Psoas muscle (tissue), 8 donors: ENCODE measurements at regions of chr10 and their contacts with region 1.

Region 1: DNA sequence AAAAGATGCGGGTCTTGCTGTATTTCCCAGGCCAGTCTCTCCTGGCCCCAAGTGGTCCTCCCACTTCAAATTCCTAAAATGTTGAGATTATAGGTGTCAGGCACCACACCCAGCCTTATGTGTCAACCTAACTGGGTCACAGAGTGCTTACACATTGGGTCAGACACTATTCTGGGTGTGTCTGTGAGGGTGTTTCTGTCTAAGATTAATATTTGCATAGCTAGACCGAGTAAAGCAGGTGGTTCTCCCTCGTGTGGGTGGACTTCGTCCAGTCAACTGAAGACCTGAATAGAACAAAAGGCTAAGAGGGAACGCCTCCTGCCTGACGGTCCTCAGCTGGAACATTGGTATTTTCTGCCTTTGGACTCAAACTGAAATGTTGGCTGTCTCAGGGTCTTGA is 11.5 kb downstream of the PPIF start:
- DNase-seq: peak in 1 of 2 donors; percentile 46
- ATAC-seq: peak; percentile 86 to 97 (median 94)
- H3K4me3 ChIP-seq: no peak overlapping the region
- H3K27ac ChIP-seq: peak overlapping the region; percentile 56
- H3K4me1 ChIP-seq: peaks cover 9% of the 10 kb centered on the region
- H3K27me3 ChIP-seq: no peaks in the 10 kb centered on the region
- CTCF ChIP-seq: no peak

Region 2: DNA sequence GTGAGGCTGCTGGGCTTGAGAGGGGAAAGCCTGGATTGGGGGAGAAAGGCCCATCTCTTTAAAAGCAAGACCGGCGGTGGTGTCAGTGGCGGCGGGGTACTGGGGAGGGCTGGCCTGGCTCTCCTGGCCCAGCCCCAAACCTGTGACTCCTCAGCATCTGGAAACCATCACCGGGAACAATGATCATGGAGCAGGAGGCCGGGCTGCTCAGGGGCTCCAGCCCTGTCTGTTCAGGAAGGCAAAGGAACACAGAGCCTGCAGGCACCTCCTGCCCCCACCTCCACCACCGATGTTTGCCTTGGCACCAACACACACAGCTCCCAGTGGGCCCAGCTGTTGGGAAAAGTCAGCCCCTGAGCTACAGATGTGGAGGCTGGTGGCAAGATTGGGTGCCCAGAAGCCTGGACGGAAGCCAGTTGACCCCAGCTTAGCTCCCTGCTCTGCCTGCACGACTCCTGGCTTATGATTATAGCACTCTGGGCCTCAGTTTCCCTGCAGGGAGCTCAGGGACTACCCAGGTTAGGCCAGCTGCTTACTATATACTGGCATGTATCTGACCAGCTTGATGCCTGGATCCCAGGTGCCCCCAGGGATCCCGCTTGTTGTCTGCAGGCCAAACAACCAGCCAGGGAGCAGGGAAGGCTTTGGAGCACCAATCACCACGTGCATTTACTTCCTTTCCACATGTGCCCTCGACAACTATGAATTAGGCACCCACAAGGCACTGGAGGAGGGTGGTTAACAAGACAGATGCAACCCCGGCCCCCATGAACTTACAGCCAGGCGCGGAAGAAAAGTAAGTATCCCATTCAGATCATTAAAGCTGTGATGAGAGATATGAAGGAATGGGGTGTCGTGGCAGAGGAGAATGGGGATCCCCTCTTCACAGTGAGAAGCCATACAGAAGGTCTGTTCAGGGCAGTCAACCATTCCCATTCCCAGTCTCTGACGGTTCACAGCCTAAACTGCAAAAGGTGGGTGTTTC is 49.3 kb after region 1 on chr10:
- intact Hi-C with region 1: no loop called
- DNase-seq: peak; percentile 65 to 74
- ATAC-seq: no peak
- H3K4me3 ChIP-seq: no peak overlapping the region
- H3K27ac ChIP-seq: peak overlapping the region; percentile 58
- H3K4me1 ChIP-seq: peaks cover 73% of the 10 kb centered on the region
- H3K27me3 ChIP-seq: no peaks in the 10 kb centered on the region
- CTCF ChIP-seq: no peak

Region 3: DNA sequence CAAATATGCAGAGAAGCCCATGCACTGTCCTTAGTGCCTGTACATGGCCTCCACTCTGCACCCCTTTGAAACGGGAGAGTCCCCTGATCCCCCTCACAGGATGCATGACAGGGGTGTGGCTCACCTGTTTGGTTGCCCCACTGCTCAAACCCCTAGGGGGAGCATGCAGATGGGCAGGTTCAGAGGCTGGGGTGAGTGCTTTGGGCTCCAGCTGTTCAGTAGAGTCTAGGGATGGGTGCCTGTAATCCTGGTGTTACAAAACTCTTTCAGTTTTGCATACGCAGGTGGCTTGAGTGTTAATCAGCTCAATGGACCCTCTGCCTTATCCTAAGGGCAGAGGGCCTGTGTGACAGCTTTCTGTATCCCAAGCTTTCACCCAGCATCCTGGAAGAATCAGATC is 244.2 kb after region 1 on chr10:
- intact Hi-C with region 1: loop called in 1 of 2 experiments (anchors 5 kb)
- DNase-seq: no peak
- ATAC-seq: no peak
- H3K4me3 ChIP-seq: no peak overlapping the region
- H3K27ac ChIP-seq: no peak overlapping the region
- H3K4me1 ChIP-seq: no peaks in the 10 kb centered on the region
- H3K27me3 ChIP-seq: peaks cover 0 to 11% (median 0%) of the 10 kb centered on the region in 3 donors
- CTCF ChIP-seq: no peak